Heart left ventricle (tissue), 16 donors: ENCODE measurements at regions of chr6 and their contacts with region 1.

Region 1: GRCh38 chr6:97586344-97586743 is 303.3 kb upstream of the MMS22L start:
- DNase-seq: no peak
- ATAC-seq: peak in 3 of 4 donors; percentile 22 to 55 (median 33)
- H3K4me3 ChIP-seq: no peak overlapping the region
- H3K27ac ChIP-seq: no peak overlapping the region
- H3K4me1 ChIP-seq: no peaks in the 10 kb centered on the region
- H3K27me3 ChIP-seq: no peaks in the 10 kb centered on the region
- CTCF ChIP-seq: peak in 7 of 12 donors; percentile 11 to 44 (median 13)
- POLR2A ChIP-seq: no peak

Region 2: DNA sequence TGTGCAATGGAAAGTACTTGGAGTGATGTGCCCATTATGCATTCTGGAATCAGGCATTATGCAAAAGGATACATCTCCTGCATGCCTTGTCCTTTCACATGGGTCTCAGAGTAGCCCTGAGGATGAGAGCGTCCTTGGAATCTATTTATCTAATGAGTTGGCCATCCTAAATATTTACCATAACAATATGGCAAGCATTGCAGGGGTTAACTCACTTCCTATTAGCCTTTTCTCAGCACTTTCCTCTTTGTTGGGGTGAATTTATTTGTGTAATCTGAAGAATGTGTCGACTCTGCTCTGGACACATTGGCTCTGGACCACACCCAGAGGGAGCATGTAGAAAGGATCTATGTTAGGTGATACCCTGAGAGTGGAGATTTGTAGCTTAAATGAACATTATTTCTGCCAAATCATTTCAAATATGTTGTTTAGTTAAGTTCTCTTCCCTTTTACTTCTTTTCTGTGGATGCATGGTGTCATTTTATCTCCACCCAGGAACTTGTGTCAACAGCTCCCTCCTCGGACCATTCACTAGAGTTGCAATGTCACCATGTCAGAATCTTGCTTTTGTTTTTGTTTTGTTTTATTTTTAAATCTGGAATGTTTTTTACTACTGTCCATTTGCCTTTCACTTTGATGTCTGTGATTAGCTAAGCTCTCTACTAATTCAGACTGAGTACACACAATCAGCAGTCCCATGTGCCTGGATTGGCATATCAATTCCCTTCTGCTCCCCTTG is 453.7 kb after region 1 on chr6:
- intact Hi-C with region 1: loop called in 1 of 10 experiments (anchors 10 kb)
- DNase-seq: no peak
- ATAC-seq: no peak
- H3K4me3 ChIP-seq: no peak overlapping the region
- H3K27ac ChIP-seq: no peak overlapping the region
- H3K4me1 ChIP-seq: no peaks in the 10 kb centered on the region
- H3K27me3 ChIP-seq: peaks cover 0 to 12% (median 0%) of the 10 kb centered on the region in 9 donors
- CTCF ChIP-seq: peak in 7 of 12 donors; percentile 10 to 48 (median 36)
- POLR2A ChIP-seq: no peak